Panc1 (cell line): ENCODE measurements at regions of chr11 and their contacts with region 1.

Region 1: GRCh38 chr11:86041975-86042378 is 26.9 kb downstream of the PICALM start:
- DNase-seq: peak; percentile 90
- ATAC-seq: peak; percentile 86
- H3K4me3 ChIP-seq: no peak overlapping the region
- H3K27ac ChIP-seq: peak overlapping the region; percentile 67; the same call in 1 of the 2 replicates
- H3K4me1 ChIP-seq: peaks cover 41% of the 10 kb centered on the region
- H3K27me3 ChIP-seq: no peaks in the 10 kb centered on the region
- CTCF ChIP-seq: peak; percentile 86; the same call in 1 of the 2 replicates

Region 2: DNA sequence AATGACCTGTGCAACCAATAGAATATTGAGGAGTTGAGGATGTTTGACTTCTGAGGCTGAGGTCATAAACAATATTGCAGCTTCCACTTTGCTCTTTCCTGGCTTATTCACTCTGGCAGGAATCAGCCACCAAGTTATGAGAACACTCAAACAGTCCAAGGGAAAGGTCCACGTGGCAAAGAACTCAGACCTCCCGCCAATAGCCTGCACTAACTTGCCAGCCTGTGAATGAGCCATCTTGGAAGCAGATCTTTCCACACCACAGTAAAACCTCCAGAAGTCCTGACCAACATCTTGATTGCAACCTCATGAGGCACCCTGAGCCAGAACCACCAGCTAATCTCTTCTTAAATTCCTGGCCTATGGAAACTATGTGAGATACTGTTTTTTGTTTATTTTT is 49.6 kb after region 1 on chr11:
- CTCF ChIA-PET with region 1: interaction called, 11 read pairs
- POLR2A ChIA-PET with region 1: no interaction called
- in situ Hi-C with region 1: no loop called
- intact Hi-C with region 1: no loop called
- DNase-seq: no peak
- ATAC-seq: 0 out of 2 replicates have a peak, but pooled peaks have one; percentile 44
- H3K4me3 ChIP-seq: no peak overlapping the region
- H3K27ac ChIP-seq: no peak overlapping the region
- H3K4me1 ChIP-seq: no peaks in the 10 kb centered on the region
- H3K27me3 ChIP-seq: no peaks in the 10 kb centered on the region
- CTCF ChIP-seq: no peak

Region 3: DNA sequence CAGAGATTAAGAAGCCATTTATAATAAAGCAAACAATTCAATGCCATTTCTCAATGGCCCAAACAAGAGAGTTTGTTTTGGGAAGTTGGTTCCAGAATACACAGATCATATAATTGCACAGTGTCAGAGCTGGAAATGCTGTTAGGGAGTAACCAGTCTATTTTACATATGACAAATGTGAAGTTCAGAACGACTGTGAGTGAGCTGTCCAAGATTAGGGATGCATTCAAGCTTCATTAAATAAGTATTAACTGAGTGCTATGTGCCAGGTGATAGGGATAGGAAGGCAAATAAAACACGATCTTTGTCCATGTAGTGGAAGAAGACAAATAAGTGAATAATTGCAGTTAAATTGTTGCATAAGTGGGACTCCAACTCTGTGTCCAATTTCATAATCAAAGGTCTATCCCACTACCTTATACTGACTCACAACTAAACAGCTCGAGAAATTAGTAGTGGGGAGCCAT is 60.0 kb after region 1 on chr11:
- CTCF ChIA-PET with region 1: no interaction called
- POLR2A ChIA-PET with region 1: no interaction called
- in situ Hi-C with region 1: no loop called
- intact Hi-C with region 1: no loop called
- DNase-seq: peak; percentile 77
- ATAC-seq: peak; percentile 90
- H3K4me3 ChIP-seq: no peak overlapping the region
- H3K27ac ChIP-seq: peak overlapping the region; percentile 1; the same call in 1 of the 2 replicates
- H3K4me1 ChIP-seq: peaks cover 12% of the 10 kb centered on the region; the same call in 1 of the 2 replicates
- H3K27me3 ChIP-seq: no peaks in the 10 kb centered on the region
- CTCF ChIP-seq: no peak

Region 4: DNA sequence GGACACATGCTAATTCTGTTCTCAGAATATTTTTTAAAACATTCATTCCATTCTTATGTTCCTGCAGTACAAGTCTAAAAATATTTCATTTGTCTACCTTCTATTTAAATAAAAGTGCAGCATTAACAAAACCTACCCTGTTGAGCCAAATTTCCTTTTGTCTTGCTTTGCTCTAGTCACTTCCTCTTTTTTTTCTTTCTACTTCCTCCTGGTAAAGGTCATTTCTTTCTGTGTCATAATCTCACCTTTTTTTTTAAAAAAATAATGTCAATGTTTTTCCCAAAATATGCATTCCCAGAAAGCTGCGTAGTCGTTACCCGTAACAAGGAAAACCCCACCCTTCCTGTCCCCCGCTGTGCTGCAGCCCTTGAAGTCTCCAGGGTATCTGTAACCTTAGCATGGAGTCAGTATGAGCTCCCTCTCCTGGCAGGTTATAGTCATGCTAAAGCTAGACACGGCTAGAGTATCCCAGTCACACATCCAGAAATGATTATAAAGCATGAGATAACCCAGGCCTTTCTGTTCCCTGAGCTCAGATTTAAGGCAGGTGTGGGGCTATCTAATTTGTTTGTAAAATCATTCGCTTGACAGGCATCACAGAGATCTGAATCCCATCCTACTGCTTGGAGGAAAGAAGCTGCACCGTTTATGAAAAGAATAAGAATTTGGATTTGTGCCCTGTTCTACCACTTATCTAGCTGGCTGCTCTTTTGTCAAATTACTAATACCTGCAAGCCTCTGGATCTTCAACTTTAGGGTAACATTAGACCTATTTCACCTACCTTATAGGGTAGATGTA is 151.5 kb after region 1 on chr11:
- CTCF ChIA-PET with region 1: interaction called, 13 read pairs
- POLR2A ChIA-PET with region 1: no interaction called
- in situ Hi-C with region 1: no loop called
- intact Hi-C with region 1: loop called (anchors 1 kb)
- DNase-seq: peak; percentile 67
- ATAC-seq: peak; percentile 100
- H3K4me3 ChIP-seq: peak overlapping the region; percentile 12 to 35; a peak in 3 of 4 replicates
- H3K27ac ChIP-seq: peak overlapping the region; percentile 51; the same call in 1 of the 2 replicates
- H3K4me1 ChIP-seq: peaks cover 9% of the 10 kb centered on the region; the same call in 1 of the 2 replicates
- H3K27me3 ChIP-seq: peaks cover 5% of the 10 kb centered on the region; the same call in 1 of the 2 replicates
- CTCF ChIP-seq: peak; percentile 90